Ovary (tissue), 10 donors: ENCODE measurements at regions of chr7 and their contacts with region 1.

Region 1: DNA sequence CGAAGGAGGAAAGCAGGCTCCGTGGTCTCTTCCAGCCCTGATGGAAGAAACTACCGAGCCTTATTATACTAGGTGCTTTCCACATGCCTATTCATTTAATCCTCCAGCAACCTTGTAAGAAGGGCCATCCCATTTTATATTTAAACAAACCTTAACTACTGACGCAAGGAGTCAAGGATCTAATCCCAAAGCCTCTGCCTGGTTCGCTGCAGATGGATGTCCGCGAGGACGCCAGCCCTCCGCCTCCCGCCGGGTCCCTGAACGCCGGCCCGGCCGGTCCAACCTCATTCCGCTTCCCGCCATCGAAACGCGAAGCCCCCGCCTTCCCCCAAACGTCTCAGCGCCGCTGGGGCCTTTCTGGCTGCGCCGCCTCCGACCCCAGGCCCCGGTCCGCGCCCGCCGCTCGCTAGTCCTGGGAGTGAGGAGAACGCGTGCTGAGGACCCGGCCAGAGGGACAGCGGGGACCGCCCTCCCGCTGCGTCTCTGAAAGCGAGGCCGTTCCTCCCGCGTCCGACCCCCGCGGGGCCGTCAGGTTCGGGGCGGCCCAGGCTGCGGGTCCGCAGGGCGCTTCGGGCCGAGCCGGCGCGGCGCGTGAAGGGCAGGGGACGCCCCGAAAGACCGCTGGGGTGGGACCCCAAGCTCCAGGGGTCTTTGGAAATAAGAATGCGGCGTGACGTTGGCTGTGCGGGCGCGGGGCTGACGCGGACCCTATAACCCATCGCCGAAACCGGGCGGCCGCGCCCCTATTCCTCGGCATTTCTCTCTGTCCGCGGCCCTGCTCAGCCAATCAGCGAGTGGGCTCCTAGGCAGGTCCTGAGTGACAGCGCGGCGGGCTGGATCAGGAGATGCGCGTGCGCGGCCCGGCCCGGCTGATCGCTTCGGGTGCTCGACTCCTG is at the start of gene ATP6V0E2:
- DNase-seq: peak; percentile 92 to 94 (median 93)
- H3K4me3 ChIP-seq: peak within 1 kb of the TSS; percentile 66
- H3K27ac ChIP-seq: peak within 1 kb of the TSS; percentile 73 to 92
- H3K4me1 ChIP-seq: peaks cover 3% of the 10 kb centered on the region
- H3K27me3 ChIP-seq: no peaks in the 10 kb centered on the region
- CTCF ChIP-seq: peak in 1 of 3 donors; percentile 14
- EP300 ChIP-seq: no peak
- POLR2A ChIP-seq: peak; percentile 55
- total RNA-seq, gene ATP6V0E2: 10.7 to 19.6 (median 13.2) TPM

Region 2: GRCh38 chr7:150368096-150368883 is 495.0 kb after region 1 on chr7 and contains the start of gene REPIN1:
- intact Hi-C with region 1: loop called in 1 of 4 experiments (anchors 5 kb)
- DNase-seq: peak; percentile 90 to 94 (median 93)
- H3K4me3 ChIP-seq: peak within 1 kb of the TSS; percentile 88
- H3K27ac ChIP-seq: peak within 1 kb of the TSS; percentile 85 to 95
- H3K4me1 ChIP-seq: peaks cover 6% of the 10 kb centered on the region
- H3K27me3 ChIP-seq: no peaks in the 10 kb centered on the region
- CTCF ChIP-seq: peak in 1 of 3 donors; percentile 4
- EP300 ChIP-seq: no peak
- POLR2A ChIP-seq: peak; percentile 78
- total RNA-seq, gene REPIN1: 43.9 to 92.0 (median 74.2) TPM

Region 3: DNA sequence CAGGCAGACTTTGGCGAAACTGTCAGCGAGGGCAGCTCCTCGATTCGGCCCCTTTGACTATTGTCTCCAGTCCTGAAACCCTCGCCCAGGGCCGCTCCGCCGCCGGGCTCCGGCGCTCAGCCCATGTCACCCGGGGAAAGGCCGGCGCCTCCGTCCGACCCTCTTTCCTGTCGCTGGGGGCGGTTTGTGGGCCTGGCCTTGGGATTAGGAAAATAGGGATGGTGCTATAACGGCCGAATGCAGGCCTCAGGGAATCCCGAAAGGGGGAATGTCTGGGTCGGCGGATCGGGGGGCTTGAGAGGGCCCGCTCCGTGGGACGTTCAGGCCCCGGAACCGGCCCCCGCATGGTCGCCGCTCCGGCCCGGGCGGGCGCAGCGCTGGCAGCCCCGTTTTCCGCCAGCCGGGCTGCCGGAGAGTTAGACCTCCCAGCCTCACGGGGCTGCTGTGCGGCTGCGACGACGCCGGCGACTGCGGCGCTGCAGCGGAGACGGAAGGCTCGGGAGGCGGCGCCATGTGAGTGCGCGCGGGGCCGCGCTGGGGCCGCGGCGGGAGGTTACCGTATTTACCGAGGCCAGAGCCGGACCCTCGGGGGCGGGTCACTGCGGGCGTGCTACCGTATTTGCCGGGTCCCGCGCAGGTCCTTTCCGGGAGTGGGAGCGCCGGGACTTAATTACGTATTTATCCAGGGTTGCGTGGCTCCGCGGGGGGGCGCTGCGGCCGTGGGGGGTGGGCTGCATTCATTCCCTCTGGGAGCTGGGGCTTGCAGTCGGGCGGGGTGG is 531.7 kb after region 1 on chr7:
- intact Hi-C with region 1: loop called in 1 of 4 experiments (anchors 10 kb)
- DNase-seq: peak; percentile 90 to 94 (median 91)
- H3K4me3 ChIP-seq: peak overlapping the region; percentile 62
- H3K27ac ChIP-seq: peak overlapping the region; percentile 71 to 90
- H3K4me1 ChIP-seq: peaks cover 11% of the 10 kb centered on the region
- H3K27me3 ChIP-seq: no peaks in the 10 kb centered on the region
- CTCF ChIP-seq: peak in 1 of 3 donors; percentile 6
- EP300 ChIP-seq: no peak
- POLR2A ChIP-seq: peak; percentile 86